Natural killer cell (primary cell): ENCODE measurements at regions of chr14 and their contacts with region 1.

Region 1: GRCh38 chr14:24215495-24216344 is at the start of gene MDP1:
- DNase-seq: peak; percentile 81 to 96
- ATAC-seq: peak; percentile 74 to 86 (median 74)
- H3K4me3 ChIP-seq: peak within 1 kb of the TSS; percentile 63
- H3K4me3 Mint-ChIP-seq: peak within 1 kb of the TSS; percentile 90
- H3K27ac ChIP-seq: peak within 1 kb of the TSS; percentile 82
- H3K27ac Mint-ChIP-seq: peak within 1 kb of the TSS; percentile 98 to 99
- H3K4me1 ChIP-seq: peaks cover 30% of the 10 kb centered on the region
- H3K4me1 Mint-ChIP-seq: peaks cover 48 to 50% of the 10 kb centered on the region in 2 donors
- H3K27me3 ChIP-seq: no peaks in the 10 kb centered on the region
- H3K27me3 Mint-ChIP-seq: no peaks in the 10 kb centered on the region
- CTCF ChIP-seq: peak; percentile 61
- total RNA-seq, gene MDP1: 4.0 to 6.1 (median 5.5) TPM

Region 2: DNA sequence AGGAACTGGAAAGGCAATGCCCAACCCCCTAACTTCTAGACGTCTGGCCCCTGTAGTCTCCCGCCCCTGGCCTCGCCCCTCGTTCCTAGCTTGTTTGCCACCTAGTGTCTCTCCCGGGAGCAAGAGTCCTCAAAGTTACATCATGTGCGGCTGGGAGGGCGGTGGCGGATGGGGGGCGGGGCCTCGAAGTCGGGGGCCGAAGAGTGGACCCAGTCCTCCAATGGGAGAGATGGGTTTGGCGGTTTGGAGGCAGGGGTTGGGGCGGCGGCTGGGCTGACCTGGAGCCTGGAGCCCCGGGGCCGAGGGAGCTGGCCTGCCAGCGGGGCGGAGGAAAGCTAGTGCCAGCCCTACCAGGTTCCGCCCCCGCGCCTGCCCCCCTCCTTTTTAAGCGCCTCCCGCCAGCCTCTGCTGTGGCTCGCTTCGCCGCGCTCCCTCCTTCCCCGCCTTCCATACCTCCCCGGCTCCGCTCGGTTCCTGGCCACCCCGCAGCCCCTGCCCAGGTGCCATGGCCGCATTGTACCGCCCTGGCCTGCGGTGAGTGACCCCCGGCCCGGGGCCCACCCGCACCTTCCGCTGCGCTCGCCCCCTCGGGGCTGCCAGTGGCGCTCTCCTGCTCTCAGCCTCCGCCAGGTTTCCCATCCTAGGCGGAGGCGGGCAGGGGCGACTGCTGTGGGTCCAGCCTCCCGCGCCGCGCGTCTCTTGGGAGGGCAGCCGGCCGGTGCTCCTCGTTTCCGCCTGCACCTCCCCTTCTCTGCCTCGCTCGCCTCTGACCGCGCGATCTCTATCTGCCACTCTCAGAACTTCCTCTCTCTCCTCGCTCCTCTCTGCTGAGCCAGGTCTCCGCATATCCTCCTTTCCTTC is 121.6 kb before region 1 on chr14 and contains the start of gene PCK2:
- intact Hi-C with region 1: no loop called
- DNase-seq: peak; percentile 62 to 77
- ATAC-seq: peak; percentile 79 to 82 (median 79)
- H3K4me3 ChIP-seq: peak within 1 kb of the TSS; percentile 78
- H3K4me3 Mint-ChIP-seq: peak within 1 kb of the TSS; percentile 98
- H3K27ac ChIP-seq: peak within 1 kb of the TSS; percentile 90
- H3K27ac Mint-ChIP-seq: peak within 1 kb of the TSS; percentile 89 to 96
- H3K4me1 ChIP-seq: peaks cover 28% of the 10 kb centered on the region
- H3K4me1 Mint-ChIP-seq: peaks cover 20 to 38% of the 10 kb centered on the region in 2 donors
- H3K27me3 ChIP-seq: no peaks in the 10 kb centered on the region
- H3K27me3 Mint-ChIP-seq: no peaks in the 10 kb centered on the region
- CTCF ChIP-seq: no peak
- total RNA-seq, gene PCK2: 9.8 to 13.8 (median 12.3) TPM

Region 3: DNA sequence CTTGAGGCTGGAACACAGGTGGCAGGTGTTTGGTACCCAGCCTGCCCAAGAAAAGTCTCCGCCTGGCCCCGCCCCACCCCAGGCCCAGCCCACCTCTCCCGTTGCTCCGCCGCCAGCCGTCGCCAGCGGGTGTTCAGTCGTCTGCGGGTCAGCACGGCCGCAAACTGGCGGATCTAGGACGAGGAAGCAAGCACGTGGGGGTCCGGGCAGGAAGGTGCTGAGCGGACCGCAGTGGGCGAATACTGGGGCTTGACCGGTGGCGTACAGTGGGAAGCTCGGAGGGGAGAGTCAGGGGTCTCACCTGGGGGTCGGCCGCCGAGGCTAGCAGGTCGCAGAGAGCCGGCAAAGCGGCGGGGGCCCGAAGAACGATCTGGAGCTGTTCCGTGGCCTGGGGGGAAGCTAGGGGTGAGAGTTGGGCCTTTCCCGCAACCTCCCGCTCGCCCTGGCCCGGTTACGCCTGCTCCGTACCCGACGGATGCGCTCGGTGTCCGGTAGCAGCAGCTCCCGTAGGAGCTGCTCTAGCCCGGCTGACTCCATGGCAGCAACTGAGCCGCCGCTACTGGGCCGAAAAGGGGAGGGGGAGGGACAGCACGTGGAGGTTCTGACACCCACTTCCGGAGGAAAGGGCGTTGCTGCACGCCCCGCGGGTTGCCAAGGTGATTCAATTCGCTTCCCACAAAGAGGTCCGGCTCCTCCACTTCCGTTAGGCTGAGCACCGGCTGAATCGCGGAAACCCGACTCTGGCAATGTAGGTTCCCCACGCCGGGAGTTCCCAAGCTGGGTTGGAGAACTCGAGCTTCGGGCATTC is 27.3 kb before region 1 on chr14 and contains the start of gene IPO4:
- intact Hi-C with region 1: loop called (anchors 1 kb)
- DNase-seq: peak; percentile 87 to 98
- ATAC-seq: peak; percentile 92 to 97 (median 93)
- H3K4me3 ChIP-seq: peak within 1 kb of the TSS; percentile 56
- H3K4me3 Mint-ChIP-seq: peak within 1 kb of the TSS; percentile 85
- H3K27ac ChIP-seq: peak within 1 kb of the TSS; percentile 68
- H3K27ac Mint-ChIP-seq: peak within 1 kb of the TSS; percentile 83 to 97
- H3K4me1 ChIP-seq: peaks cover 23% of the 10 kb centered on the region
- H3K4me1 Mint-ChIP-seq: peaks cover 26 to 34% of the 10 kb centered on the region in 2 donors
- H3K27me3 ChIP-seq: no peaks in the 10 kb centered on the region
- H3K27me3 Mint-ChIP-seq: no peaks in the 10 kb centered on the region
- CTCF ChIP-seq: no peak
- total RNA-seq, gene IPO4: 46.2 to 61.5 (median 51.9) TPM

Region 4: GRCh38 chr14:24232121-24232644 is 16.5 kb after region 1 on chr14 and contains the start of gene NEDD8:
- intact Hi-C with region 1: loop called (anchors 1 kb)
- DNase-seq: peak; percentile 78 to 92
- ATAC-seq: peak; percentile 88 to 91 (median 90)
- H3K4me3 ChIP-seq: peak within 1 kb of the TSS; percentile 71
- H3K4me3 Mint-ChIP-seq: peak within 1 kb of the TSS; percentile 86
- H3K27ac ChIP-seq: peak within 1 kb of the TSS; percentile 77
- H3K27ac Mint-ChIP-seq: peak within 1 kb of the TSS; percentile 87 to 100
- H3K4me1 ChIP-seq: peaks cover 24% of the 10 kb centered on the region
- H3K4me1 Mint-ChIP-seq: peaks cover 46 to 55% of the 10 kb centered on the region in 2 donors
- H3K27me3 ChIP-seq: no peaks in the 10 kb centered on the region
- H3K27me3 Mint-ChIP-seq: no peaks in the 10 kb centered on the region
- CTCF ChIP-seq: no peak
- total RNA-seq, gene NEDD8: 93.6 to 109 (median 95.9) TPM

Region 5: DNA sequence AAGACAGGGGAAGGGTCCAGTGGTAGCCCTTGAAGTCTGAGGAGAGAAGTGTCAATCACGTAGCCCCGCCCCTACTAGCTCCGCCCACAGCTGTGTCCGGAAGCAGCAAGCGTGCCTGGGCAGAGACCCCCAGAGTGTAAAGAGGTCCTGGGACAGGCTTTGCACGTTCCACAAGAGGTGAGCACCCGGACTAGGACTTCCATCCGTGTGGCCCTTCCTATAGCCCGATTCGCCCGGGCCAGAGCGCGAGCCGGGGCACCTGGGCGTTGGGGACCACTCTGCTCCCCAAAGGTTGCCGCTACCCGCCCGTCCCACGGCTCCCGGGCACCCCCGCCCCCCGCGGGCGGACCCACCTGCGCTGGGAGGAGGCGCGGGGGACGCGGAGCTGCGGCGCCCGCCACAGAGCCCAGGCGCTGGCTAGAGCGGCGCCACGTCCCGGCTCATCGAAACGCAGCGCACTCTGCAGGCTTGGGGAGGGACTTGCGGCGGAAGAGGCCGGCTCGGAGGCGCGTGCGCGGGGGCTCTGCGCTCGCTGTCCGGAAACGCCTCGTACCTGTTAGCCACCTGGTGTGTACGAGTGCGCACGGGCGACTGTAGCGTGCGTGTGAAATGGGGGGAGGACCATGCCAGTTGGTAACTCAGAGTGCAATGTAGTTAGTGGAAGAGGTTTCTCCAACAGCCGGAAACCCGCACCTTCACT is 55.6 kb after region 1 on chr14 and contains the start of gene RABGGTA:
- intact Hi-C with region 1: loop called (anchors 1 kb)
- DNase-seq: peak; percentile 92 to 99
- ATAC-seq: peak; percentile 84 to 94 (median 87)
- H3K4me3 ChIP-seq: peak within 1 kb of the TSS; percentile 88
- H3K4me3 Mint-ChIP-seq: peak within 1 kb of the TSS; percentile 94
- H3K27ac ChIP-seq: peak within 1 kb of the TSS; percentile 99
- H3K27ac Mint-ChIP-seq: peak within 1 kb of the TSS; percentile 91 to 92
- H3K4me1 ChIP-seq: peaks cover 30% of the 10 kb centered on the region
- H3K4me1 Mint-ChIP-seq: peaks cover 25 to 30% of the 10 kb centered on the region in 2 donors
- H3K27me3 ChIP-seq: no peaks in the 10 kb centered on the region
- H3K27me3 Mint-ChIP-seq: no peaks in the 10 kb centered on the region
- CTCF ChIP-seq: peak; percentile 63
- total RNA-seq, gene RABGGTA: 72.9 to 95.1 (median 88.5) TPM

Region 6: GRCh38 chr14:24310646-24311604 is 95.2 kb after region 1 on chr14 and contains the start of gene LTB4R:
- intact Hi-C with region 1: loop called (anchors 5 kb)
- DNase-seq: peak; percentile 69 to 87
- ATAC-seq: peak; percentile 75 to 87 (median 81)
- H3K4me3 ChIP-seq: peak within 1 kb of the TSS; percentile 45
- H3K4me3 Mint-ChIP-seq: peak within 1 kb of the TSS; percentile 88
- H3K27ac ChIP-seq: peak within 1 kb of the TSS; percentile 84
- H3K27ac Mint-ChIP-seq: peak within 1 kb of the TSS; percentile 94 to 96
- H3K4me1 ChIP-seq: peaks cover 77% of the 10 kb centered on the region
- H3K4me1 Mint-ChIP-seq: peaks cover 71 to 92% of the 10 kb centered on the region in 2 donors
- H3K27me3 ChIP-seq: no peaks in the 10 kb centered on the region
- H3K27me3 Mint-ChIP-seq: no peaks in the 10 kb centered on the region
- CTCF ChIP-seq: peak; percentile 37
- total RNA-seq, gene LTB4R: 33.5 to 55.7 (median 49.7) TPM

Region 7: DNA sequence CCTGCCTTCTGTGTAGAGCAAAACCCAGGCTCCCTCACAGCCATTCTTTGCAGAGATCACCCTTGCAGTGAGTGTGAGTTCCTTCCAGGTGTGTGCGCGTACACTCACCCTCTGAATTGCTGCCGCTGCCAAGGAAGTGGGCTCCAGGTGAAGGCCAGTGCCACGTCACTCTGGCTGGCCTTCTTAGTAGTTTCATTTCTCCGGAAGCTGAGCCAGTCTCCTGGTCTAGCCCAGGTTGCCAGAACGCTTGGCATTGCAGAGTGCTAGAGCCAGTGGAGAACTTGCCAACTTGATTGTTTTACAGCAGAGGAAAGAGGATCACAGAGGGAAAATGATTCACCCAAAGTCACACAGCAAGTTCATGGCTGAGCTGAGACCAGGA is 202.8 kb after region 1 on chr14:
- intact Hi-C with region 1: no loop called
- DNase-seq: no peak
- ATAC-seq: no peak
- H3K4me3 ChIP-seq: no peak overlapping the region
- H3K4me3 Mint-ChIP-seq: no peak overlapping the region
- H3K27ac ChIP-seq: no peak overlapping the region
- H3K27ac Mint-ChIP-seq: no peak overlapping the region
- H3K4me1 ChIP-seq: peaks cover 5% of the 10 kb centered on the region
- H3K4me1 Mint-ChIP-seq: no peaks in the 10 kb centered on the region
- H3K27me3 ChIP-seq: no peaks in the 10 kb centered on the region
- H3K27me3 Mint-ChIP-seq: peaks cover 0 to 11% of the 10 kb centered on the region in 2 donors
- CTCF ChIP-seq: no peak